Activated naive CD4-positive, alpha-beta T cell treated with anti-CD3 and anti-CD28 coated beads for 36 hours (primary cell): ENCODE measurements at regions of chr1 and their contacts with region 1.

Region 1: GRCh38 chr1:227563324-227564201 is at the start of gene ZNF678:
- DNase-seq: peak; percentile 96
- H3K4me3 Mint-ChIP-seq: peak within 1 kb of the TSS; percentile 94
- H3K27ac Mint-ChIP-seq: peak within 1 kb of the TSS; percentile 93
- H3K4me1 Mint-ChIP-seq: peaks cover 37% of the 10 kb centered on the region
- H3K27me3 Mint-ChIP-seq: peaks cover 26% of the 10 kb centered on the region
- total RNA-seq, gene ZNF678: 9.5 TPM

Region 2: DNA sequence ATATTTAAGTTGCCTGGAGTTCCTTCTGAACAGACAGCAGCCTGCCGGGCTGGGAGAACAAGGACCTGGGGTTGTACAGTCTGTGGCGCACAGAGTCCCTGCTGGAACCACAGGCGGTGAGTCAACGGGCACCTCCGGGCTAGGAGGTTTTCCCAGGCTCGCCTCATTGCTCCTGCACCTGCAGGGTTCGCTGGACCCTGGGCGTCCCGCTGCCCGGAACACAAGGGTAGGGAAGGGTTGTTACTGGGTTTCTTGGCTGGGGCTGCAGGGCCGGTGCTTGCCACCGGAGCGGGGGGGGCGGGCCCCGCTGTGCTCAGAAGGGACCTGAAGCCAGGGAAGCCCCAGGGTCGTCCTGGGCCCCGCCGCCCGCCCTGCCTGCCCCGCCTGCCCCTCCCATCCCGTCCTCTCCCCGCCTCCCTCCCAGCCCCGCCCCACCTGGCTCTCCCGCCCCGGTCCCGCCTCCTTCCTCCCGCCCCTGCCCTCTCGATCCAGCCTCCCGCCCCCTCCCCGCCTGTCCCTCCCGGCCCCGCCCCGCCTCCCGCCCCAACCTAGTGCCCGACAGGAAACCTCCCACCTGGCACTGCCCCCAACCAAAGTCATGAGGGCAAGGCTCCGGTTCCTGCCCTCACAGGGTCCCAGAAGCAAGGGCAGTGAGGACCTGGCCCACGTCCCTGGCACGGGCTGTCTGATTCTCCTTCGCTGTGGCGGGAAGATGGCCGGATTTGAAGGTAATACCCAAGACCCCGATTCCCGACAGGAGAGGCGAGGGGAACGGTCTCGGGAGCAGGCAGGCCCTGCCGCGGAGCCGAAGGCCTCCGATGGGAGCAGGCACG is 164.7 kb after region 1 on chr1:
- CTCF ChIA-PET with region 1: no interaction called
- intact Hi-C with region 1: loop called (anchors 1 kb)
- DNase-seq: peak; percentile 82
- H3K4me3 Mint-ChIP-seq: peak overlapping the region; percentile 82
- H3K27ac Mint-ChIP-seq: peak overlapping the region; percentile 65
- H3K4me1 Mint-ChIP-seq: peaks cover 22% of the 10 kb centered on the region
- H3K27me3 Mint-ChIP-seq: peaks cover 4% of the 10 kb centered on the region